Left lung (tissue), 14 donors: ENCODE measurements at regions of chr4 and their contacts with region 1.

Region 1: DNA sequence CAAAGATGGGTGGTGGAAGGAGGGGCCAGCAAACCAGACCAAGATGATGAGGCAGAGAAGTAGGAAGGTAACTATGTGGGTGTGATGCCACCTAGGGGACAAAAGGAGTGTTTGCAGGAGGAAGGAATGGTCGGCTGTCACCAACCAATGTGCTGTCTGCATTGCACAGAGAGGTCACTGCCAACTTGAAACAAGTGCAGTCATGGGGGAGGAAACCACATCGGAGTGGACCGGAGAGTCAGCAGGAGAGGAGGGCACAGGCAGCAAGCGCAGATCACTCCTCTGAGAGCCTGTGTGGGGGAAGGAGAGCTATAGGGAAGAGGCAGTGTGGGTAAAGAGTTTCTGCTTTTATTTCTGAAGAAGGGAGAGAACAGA is 38.5 kb upstream of the FGFBP2 start:
- DNase-seq: peak in 3 of 4 donors; percentile 35 to 74 (median 51)
- ATAC-seq: peak; percentile 99
- H3K4me3 ChIP-seq: no peak overlapping the region
- H3K27ac ChIP-seq: no peak overlapping the region
- H3K4me1 ChIP-seq: peaks cover 0 to 5% of the 10 kb centered on the region in 2 donors
- H3K27me3 ChIP-seq: peaks cover 0 to 9% of the 10 kb centered on the region in 2 donors
- CTCF ChIP-seq: peak; percentile 69 to 82

Region 2: GRCh38 chr4:15805583-15806517 is 195.6 kb before region 1 on chr4:
- intact Hi-C with region 1: loop called in 1 of 2 experiments (anchors 5 kb)
- DNase-seq: peak in 2 of 4 donors; percentile 16 to 46
- ATAC-seq: peak; percentile 88
- H3K4me3 ChIP-seq: no peak overlapping the region
- H3K27ac ChIP-seq: no peak overlapping the region
- H3K4me1 ChIP-seq: peaks cover 0 to 20% of the 10 kb centered on the region in 2 donors
- H3K27me3 ChIP-seq: peaks cover 0 to 5% of the 10 kb centered on the region in 2 donors
- CTCF ChIP-seq: peak; percentile 58 to 64

Region 3: DNA sequence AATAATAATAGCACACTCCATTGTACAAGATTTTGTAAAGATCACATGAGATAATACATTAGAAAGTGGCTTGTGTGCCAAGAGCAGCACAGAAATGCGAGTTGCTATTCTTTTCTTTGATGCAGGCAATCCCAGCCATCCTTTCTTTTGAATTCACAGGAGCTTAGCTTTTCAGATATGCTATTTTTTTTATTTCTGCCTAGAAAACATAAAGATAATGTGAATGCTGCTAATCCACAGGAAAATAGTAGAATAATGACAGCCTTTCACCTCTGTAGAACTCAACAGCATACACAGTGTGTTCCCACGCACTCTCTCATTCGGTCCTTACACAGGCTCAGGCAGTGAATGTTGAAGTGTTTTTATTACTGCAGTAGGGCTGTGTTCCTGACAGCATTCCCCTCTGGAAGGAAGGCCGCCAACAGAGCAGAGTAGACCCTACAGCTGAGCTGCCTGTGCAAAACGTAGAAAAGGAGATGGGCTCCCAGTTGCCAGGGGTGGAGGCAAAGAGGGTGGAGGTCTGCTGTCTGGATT is 363.6 kb after region 1 on chr4:
- intact Hi-C with region 1: no loop called
- DNase-seq: no peak
- ATAC-seq: no peak
- H3K4me3 ChIP-seq: no peak overlapping the region
- H3K27ac ChIP-seq: no peak overlapping the region
- H3K4me1 ChIP-seq: no peaks in the 10 kb centered on the region
- H3K27me3 ChIP-seq: no peaks in the 10 kb centered on the region
- CTCF ChIP-seq: no peak